ENCODE measurements at regions of chr15 and their contacts with region 1.

Region 1: DNA sequence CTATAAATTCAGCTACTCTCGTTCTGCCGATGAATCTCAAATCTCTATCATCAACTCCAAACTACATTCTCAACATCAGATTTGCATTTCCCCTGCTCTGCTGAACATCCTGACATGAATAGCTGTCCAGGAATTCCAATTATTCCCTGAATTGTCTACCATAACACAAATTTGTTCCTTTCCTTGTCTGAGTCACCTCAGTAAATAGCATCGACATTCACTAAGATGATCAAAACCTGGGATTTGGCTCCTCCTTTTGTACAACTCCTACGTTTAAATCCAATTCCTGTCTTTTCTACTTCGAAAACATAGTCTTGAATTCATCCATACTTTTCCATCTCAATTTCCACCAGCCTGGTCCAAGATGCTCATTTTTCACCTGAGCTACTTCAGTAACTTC is 107.0 kb downstream of the GREM1 start:
- DNase-seq: no peak
- H3K4me3 ChIP-seq: no peak overlapping the region
- H3K27ac ChIP-seq: no peak overlapping the region
- H3K4me1 ChIP-seq: no peaks in the 10 kb centered on the region
- H3K27me3 ChIP-seq: no peaks in the 10 kb centered on the region
- CTCF ChIP-seq: no peak
- POLR2A ChIP-seq: no peak

Region 2: DNA sequence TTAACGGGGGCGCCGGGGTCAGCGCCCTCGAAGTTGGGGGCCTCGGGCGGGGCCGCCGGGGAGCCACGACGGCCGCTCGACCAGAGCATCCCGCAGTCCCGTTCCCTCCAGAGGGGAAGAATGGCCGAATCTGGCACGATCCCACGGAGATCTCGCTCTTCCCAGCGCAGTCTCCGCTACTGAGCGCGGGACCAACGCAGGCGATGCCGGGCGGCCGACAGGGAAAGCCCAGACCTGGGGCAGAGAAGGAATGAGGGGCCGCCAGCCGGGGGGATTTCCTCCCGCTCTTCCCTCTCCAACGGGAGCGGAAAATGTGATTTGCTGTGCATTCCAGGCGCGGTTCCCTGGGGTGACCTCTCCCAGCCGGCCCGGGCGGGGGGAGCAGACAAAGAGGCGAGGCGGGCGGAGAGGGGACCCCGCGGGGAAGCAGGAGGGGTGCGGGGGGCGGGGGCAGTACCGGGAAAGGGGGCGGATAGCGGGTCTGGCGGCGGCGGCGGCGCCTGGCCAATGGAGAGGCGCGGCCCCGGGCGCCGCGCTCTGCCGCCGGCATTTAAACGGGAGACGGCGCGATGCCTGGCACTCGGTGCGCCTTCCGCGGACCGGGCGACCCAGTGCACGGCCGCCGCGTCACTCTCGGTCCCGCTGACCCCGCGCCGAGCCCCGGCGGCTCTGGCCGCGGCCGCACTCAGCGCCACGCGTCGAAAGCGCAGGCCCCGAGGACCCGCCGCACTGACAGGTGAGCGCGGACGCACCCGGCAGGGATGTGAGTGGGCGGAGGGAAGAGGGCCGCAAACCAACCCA is 107.2 kb before region 1 on chr15 and contains the start of gene GREM1:
- intact Hi-C with region 1: loop called (anchors 10 kb)
- DNase-seq: no peak
- H3K4me3 ChIP-seq: peak within 1 kb of the TSS; percentile 51 to 59
- H3K27ac ChIP-seq: peak within 1 kb of the TSS; percentile 90
- H3K4me1 ChIP-seq: peaks cover 14% of the 10 kb centered on the region
- H3K27me3 ChIP-seq: no peaks in the 10 kb centered on the region
- CTCF ChIP-seq: no peak
- POLR2A ChIP-seq: peak in 1 of 2 donors; percentile 47
- total RNA-seq, gene GREM1: 122 TPM

Measured in vagina (tissue), 2 donors.